Activated B cell treated with CpG ODN at 0.5 μM for 24 hours (primary cell): ENCODE measurements at regions of chr20 and their contacts with region 1.

Region 1: GRCh38 chr20:3767427-3768341 is at the start of gene ADISSP:
- DNase-seq: peak; percentile 95
- ATAC-seq: peak; percentile 86
- H3K4me3 Mint-ChIP-seq: peak within 1 kb of the TSS; percentile 90
- H3K27ac Mint-ChIP-seq: peak within 1 kb of the TSS; percentile 94
- H3K4me1 Mint-ChIP-seq: peaks cover 26% of the 10 kb centered on the region
- H3K27me3 Mint-ChIP-seq: peaks cover 3% of the 10 kb centered on the region
- CTCF ChIP-seq: no peak
- total RNA-seq, gene ADISSP: 29.9 and 31.1 TPM in 2 replicates

Region 2: DNA sequence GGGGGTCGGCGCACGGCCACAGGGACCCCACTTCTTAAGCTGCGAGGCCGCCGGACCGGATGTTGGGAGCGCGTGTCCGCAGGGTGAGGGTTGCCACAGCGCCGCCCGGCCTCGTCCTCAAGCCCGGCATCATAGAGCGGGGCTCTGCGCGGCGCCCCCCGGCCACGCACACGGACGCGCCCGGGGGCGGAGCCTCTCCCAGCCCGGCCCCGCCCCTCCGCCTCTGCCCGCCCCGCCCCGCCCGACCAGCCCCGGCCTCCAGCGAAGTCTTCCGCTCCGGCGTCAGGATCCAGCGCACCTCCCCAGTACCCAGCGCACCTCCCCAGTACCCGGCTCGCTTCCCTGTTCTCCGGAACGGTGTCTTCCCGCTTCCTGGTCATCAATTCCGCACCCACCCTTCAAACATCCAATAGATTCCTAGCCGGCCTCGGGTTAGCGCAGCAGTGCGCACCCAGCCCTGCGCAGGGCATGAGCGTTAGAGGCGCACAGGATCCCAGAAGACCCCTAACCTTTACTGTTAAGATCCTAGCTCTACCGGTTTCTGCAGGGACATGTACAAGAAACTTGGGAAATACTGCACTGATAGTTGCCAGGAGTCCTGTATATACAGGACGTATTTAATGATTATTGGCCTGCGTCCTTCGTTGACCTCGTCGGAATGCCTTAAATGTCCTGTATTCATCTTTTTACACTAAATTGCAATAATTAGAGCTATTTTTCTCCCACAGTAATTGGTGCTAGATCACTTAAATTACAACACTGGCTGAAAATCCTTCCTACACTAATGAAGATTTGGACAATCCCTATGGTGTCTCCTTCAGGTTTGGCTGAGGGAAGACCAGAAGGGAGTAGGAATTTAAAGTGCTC is 359.7 kb before region 1 on chr20:
- CTCF ChIA-PET with region 1: no interaction called
- POLR2A ChIA-PET with region 1: interaction called, 3 read pairs
- intact Hi-C with region 1: loop called (anchors 2 kb)
- DNase-seq: peak; percentile 68
- ATAC-seq: peak; percentile 73
- H3K4me3 Mint-ChIP-seq: peak overlapping the region; percentile 96
- H3K27ac Mint-ChIP-seq: peak overlapping the region; percentile 91
- H3K4me1 Mint-ChIP-seq: peaks cover 21% of the 10 kb centered on the region
- H3K27me3 Mint-ChIP-seq: peaks cover 2% of the 10 kb centered on the region
- CTCF ChIP-seq: no peak

Region 3: DNA sequence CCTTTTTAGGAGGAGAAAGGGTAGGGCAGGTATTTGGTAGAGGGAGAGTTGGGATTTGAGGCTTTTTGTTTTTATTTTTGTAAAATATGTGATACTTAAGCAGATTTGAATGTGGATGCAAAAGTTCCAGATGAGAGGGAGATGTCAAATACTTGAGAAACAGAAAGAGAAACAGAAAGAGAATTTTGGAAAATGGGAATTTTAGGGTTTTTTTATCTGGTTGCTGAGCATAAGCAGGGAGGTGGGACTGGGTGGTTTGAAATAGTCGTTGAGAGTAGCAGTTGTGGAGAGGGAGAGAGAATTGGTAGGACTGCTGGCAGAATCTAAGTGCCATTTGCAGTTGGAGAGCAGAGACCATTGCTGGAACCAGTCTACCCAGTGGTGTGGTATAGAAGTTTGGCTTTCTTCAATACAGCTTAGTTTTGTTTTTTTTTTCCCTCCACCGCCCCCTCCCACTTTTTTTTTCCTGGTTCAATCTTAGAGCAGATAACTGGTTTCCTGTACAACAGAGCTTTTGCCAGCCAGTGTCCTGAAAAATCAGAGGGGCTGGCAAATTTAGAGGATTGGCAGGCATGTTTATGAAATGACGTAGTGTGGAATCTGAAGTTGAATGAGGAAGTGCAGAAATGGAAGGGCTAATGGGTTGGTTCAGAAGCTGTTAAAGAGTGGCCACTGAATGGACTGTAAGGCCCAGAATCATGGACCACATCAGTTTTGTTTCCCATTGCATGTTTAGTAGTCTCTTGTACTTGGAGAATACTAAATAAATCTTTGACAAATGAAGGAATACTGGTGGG is 228.2 kb before region 1 on chr20:
- CTCF ChIA-PET with region 1: no interaction called
- POLR2A ChIA-PET with region 1: no interaction called
- intact Hi-C with region 1: no loop called
- DNase-seq: no peak
- ATAC-seq: no peak
- H3K4me3 Mint-ChIP-seq: no peak overlapping the region
- H3K27ac Mint-ChIP-seq: no peak overlapping the region
- H3K4me1 Mint-ChIP-seq: no peaks in the 10 kb centered on the region
- H3K27me3 Mint-ChIP-seq: no peaks in the 10 kb centered on the region
- CTCF ChIP-seq: no peak

Region 4: GRCh38 chr20:3716195-3716834 is 51.4 kb before region 1 on chr20:
- CTCF ChIA-PET with region 1: interaction called, 5 read pairs
- POLR2A ChIA-PET with region 1: no interaction called
- intact Hi-C with region 1: loop called (anchors 1 kb)
- DNase-seq: no peak
- ATAC-seq: peak; percentile 71
- H3K4me3 Mint-ChIP-seq: no peak overlapping the region
- H3K27ac Mint-ChIP-seq: no peak overlapping the region
- H3K4me1 Mint-ChIP-seq: no peaks in the 10 kb centered on the region
- H3K27me3 Mint-ChIP-seq: peaks cover 20% of the 10 kb centered on the region
- CTCF ChIP-seq: no peak

Region 5: GRCh38 chr20:3786665-3787323 is 19.1 kb after region 1 on chr20 and contains the start of gene CENPB:
- CTCF ChIA-PET with region 1: interaction called, 13 read pairs
- POLR2A ChIA-PET with region 1: interaction called, 27 read pairs
- intact Hi-C with region 1: loop called (anchors 1 kb)
- DNase-seq: peak; percentile 96
- ATAC-seq: peak; percentile 95
- H3K4me3 Mint-ChIP-seq: peak within 1 kb of the TSS; percentile 82
- H3K27ac Mint-ChIP-seq: peak within 1 kb of the TSS; percentile 70
- H3K4me1 Mint-ChIP-seq: peaks cover 24% of the 10 kb centered on the region
- H3K27me3 Mint-ChIP-seq: no peaks in the 10 kb centered on the region
- CTCF ChIP-seq: no peak
- total RNA-seq, gene CENPB: 50.1 and 51.7 TPM in 2 replicates

Region 6: DNA sequence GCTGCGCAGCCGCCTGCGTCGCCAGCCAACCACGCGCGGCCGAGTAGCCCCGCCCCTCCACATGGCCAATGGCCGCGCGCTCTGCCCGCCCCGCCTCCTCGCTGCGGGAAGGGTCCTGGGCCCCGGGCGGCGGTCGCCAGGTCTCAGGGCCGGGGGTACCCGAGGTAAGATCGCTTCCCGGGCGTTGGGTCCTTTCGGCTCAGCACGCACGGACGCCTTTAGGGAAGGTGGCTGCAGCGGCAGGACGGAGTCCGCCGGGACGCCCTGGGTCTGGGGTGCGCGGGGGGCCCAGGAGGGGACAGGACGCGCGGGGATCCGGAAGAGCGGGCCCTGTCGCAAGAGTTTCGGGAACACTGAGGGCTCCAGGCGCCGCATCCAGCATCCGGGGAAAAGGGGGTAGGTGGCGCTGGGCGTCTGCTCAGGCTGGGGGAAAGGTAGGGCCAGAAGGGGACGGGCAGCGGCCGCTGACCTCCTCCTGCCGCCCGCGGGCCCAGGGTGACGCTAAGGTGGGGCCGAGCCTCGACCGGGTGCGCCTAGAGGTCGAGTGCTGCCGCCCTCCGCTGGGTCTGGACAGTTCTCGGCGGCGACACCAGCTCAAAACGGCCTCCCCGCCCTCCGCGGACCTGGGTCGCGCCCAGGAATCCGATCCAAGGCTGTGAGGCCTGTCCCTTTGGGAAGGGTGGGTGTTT is 79.2 kb after region 1 on chr20 and contains the start of gene MAVS:
- CTCF ChIA-PET with region 1: no interaction called
- POLR2A ChIA-PET with region 1: interaction called, 6 read pairs
- intact Hi-C with region 1: loop called (anchors 1 kb)
- DNase-seq: peak; percentile 85
- ATAC-seq: peak; percentile 99
- H3K4me3 Mint-ChIP-seq: peak within 1 kb of the TSS; percentile 88
- H3K27ac Mint-ChIP-seq: peak within 1 kb of the TSS; percentile 80
- H3K4me1 Mint-ChIP-seq: peaks cover 26% of the 10 kb centered on the region
- H3K27me3 Mint-ChIP-seq: no peaks in the 10 kb centered on the region
- CTCF ChIP-seq: no peak
- total RNA-seq, gene MAVS: 33.5 and 39.7 TPM in 2 replicates